Gastrocnemius medialis (tissue), 4 donors: ENCODE measurements at regions of chr12 and their contacts with region 1.

Region 1: GRCh38 chr12:117836999-117837736 is 131.6 kb downstream of the KSR2 start:
- DNase-seq: peak; percentile 44 to 59
- ATAC-seq: peak; percentile 67 to 74
- H3K4me3 ChIP-seq: no peak overlapping the region
- H3K27ac ChIP-seq: no peak overlapping the region
- H3K4me1 ChIP-seq: no peaks in the 10 kb centered on the region
- H3K27me3 ChIP-seq: peaks cover 0 to 3% (median 0%) of the 10 kb centered on the region in 3 donors
- CTCF ChIP-seq: peak; percentile 85 to 92 (median 90)
- POLR2A ChIP-seq: no peak

Region 2: GRCh38 chr12:117202556-117202955 is 634.6 kb before region 1 on chr12:
- in situ Hi-C with region 1: no loop called
- intact Hi-C with region 1: no loop called
- DNase-seq: no peak
- ATAC-seq: no peak
- H3K4me3 ChIP-seq: no peak overlapping the region
- H3K27ac ChIP-seq: no peak overlapping the region
- H3K4me1 ChIP-seq: no peaks in the 10 kb centered on the region
- H3K27me3 ChIP-seq: no peaks in the 10 kb centered on the region
- CTCF ChIP-seq: no peak
- POLR2A ChIP-seq: no peak

Region 3: DNA sequence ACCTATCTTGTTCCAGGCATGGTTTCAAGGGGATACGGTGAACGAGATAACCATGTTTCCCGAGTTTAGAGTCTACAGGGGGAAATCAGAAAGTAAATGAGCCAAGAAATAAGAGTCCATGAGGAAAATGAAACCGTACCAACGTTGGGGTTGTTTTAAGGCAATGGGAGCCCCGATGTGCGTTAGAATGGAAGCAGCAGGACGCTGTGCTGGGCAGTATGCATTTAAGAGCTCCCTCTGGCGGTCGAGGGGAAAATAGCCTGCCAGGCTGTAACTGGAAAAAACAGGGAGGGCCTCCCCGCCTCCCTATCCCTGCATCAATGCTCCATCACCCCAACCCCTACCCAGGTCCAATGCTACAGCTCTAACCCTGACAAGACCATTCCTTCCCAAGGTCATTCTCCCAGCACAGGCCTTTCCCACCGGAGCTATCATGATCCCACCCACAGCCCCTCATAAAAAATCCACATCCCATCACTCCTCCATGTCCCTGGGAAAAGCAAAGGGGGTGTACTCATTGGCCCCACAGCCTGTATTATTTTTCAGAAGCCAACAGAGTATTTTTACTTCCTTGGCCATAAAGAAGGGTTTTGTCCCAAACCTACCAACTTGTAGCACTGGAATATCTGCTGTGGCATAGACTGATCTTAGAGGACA is 249.4 kb before region 1 on chr12:
- in situ Hi-C with region 1: no loop called
- intact Hi-C with region 1: loop called (anchors 10 kb)
- DNase-seq: peak; percentile 27 to 65
- ATAC-seq: peak; percentile 83 to 91
- H3K4me3 ChIP-seq: peak overlapping the region in 3 of 4 donors; percentile 27 to 33 (median 30)
- H3K27ac ChIP-seq: no peak overlapping the region
- H3K4me1 ChIP-seq: no peaks in the 10 kb centered on the region
- H3K27me3 ChIP-seq: peaks cover 0 to 5% (median 0%) of the 10 kb centered on the region in 3 donors
- CTCF ChIP-seq: peak; percentile 87 to 92 (median 90)
- POLR2A ChIP-seq: no peak

Region 4: DNA sequence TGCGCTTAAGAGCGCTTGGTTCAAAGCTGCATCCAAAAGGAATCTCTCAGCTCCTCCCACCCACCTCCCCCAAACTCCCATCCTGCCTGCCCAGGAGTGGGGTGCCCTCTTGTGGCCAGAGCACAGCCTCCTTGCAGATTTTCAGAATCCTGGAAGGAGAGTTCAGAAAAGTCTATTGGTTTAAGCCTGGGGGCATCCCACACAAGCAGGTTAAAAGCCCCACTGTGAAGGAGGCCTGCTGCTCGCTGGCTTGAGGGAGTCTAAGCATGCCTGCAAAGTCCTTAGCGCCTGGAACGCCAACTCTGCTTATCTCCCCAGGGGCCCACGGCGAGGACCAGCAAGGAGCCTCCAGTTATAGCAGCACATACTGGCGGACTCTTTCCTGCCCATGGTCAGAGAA is 165.4 kb before region 1 on chr12:
- in situ Hi-C with region 1: no loop called
- intact Hi-C with region 1: loop called (anchors 5 kb)
- DNase-seq: peak in 1 of 2 donors; percentile 15
- ATAC-seq: peak in 1 of 2 donors; percentile 33
- H3K4me3 ChIP-seq: no peak overlapping the region
- H3K27ac ChIP-seq: no peak overlapping the region
- H3K4me1 ChIP-seq: no peaks in the 10 kb centered on the region
- H3K27me3 ChIP-seq: no peaks in the 10 kb centered on the region
- CTCF ChIP-seq: peak in 4 of 5 experiments; percentile 22 to 61 (median 44)
- POLR2A ChIP-seq: no peak

Region 5: DNA sequence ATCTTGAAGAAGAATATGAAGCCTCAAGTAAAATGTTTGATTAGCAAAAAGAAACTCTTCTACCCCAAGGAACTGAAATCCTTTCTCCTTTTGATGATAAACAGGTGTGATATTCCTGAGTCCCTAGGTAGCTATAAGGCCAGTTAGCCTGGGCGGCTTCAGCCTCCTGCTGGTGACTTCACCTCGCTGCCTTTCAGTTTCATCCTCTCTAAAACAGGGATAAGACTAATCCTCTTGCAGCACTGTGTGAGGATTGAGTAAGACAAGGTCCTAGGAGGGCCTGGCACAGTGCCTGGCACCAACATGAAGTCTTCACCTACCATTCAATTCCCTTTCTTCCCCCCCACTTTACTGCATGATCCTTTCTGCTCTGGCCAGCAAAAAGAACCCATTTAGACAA is 1997.9 kb after region 1 on chr12:
- in situ Hi-C with region 1: no loop called
- intact Hi-C with region 1: no loop called
- DNase-seq: no peak
- ATAC-seq: no peak
- H3K4me3 ChIP-seq: no peak overlapping the region
- H3K27ac ChIP-seq: no peak overlapping the region
- H3K4me1 ChIP-seq: no peaks in the 10 kb centered on the region
- H3K27me3 ChIP-seq: peaks cover 0 to 3% (median 0%) of the 10 kb centered on the region in 3 donors
- CTCF ChIP-seq: no peak
- POLR2A ChIP-seq: no peak